PC-3 (cell line): ENCODE measurements at regions of chr20 and their contacts with region 1.

Region 1: GRCh38 chr20:62485062-62485700 is 9.4 kb upstream of the GATA5 start:
- DNase-seq: peak; percentile 22
- ATAC-seq: peak; percentile 50
- H3K4me3 ChIP-seq: peak overlapping the region; percentile 19; the same call in 1 of the 2 replicates
- H3K27ac ChIP-seq: no peak overlapping the region
- H3K4me1 ChIP-seq: peaks cover 28% of the 10 kb centered on the region
- H3K27me3 ChIP-seq: no peaks in the 10 kb centered on the region
- CTCF ChIP-seq: no peak

Region 2: GRCh38 chr20:62382306-62383198 is 102.6 kb before region 1 on chr20:
- CTCF ChIA-PET with region 1: no interaction called
- POLR2A ChIA-PET with region 1: no interaction called
- intact Hi-C with region 1: no loop called
- DNase-seq: peak; percentile 92
- ATAC-seq: peak; percentile 75
- H3K4me3 ChIP-seq: no peak overlapping the region
- H3K27ac ChIP-seq: no peak overlapping the region
- H3K4me1 ChIP-seq: peaks cover 21% of the 10 kb centered on the region
- H3K27me3 ChIP-seq: no peaks in the 10 kb centered on the region
- CTCF ChIP-seq: peak; percentile 95

Region 3: GRCh38 chr20:62409931-62410745 is 75.0 kb before region 1 on chr20:
- CTCF ChIA-PET with region 1: no interaction called
- POLR2A ChIA-PET with region 1: no interaction called
- intact Hi-C with region 1: loop called (anchors 5 kb)
- DNase-seq: peak; percentile 59
- ATAC-seq: peak; percentile 34
- H3K4me3 ChIP-seq: peak overlapping the region; percentile 20; the same call in 1 of the 2 replicates
- H3K27ac ChIP-seq: no peak overlapping the region
- H3K4me1 ChIP-seq: peaks cover 19% of the 10 kb centered on the region
- H3K27me3 ChIP-seq: no peaks in the 10 kb centered on the region
- CTCF ChIP-seq: peak; percentile 85